PC-3 (cell line): ENCODE measurements at regions of chr4 and their contacts with region 1.

Region 1: GRCh38 chr4:109977854-109978501 is 65.3 kb downstream of the EGF start:
- DNase-seq: peak; percentile 79
- ATAC-seq: peak; percentile 50
- H3K4me3 ChIP-seq: no peak overlapping the region
- H3K27ac ChIP-seq: no peak overlapping the region
- H3K4me1 ChIP-seq: peaks cover 19% of the 10 kb centered on the region
- H3K27me3 ChIP-seq: no peaks in the 10 kb centered on the region
- CTCF ChIP-seq: peak; percentile 63

Region 2: GRCh38 chr4:109424093-109424841 is 553.7 kb before region 1 on chr4:
- CTCF ChIA-PET with region 1: no interaction called
- POLR2A ChIA-PET with region 1: no interaction called
- intact Hi-C with region 1: loop called (anchors 2 kb)
- DNase-seq: no peak
- ATAC-seq: no peak
- H3K4me3 ChIP-seq: no peak overlapping the region
- H3K27ac ChIP-seq: no peak overlapping the region
- H3K4me1 ChIP-seq: no peaks in the 10 kb centered on the region
- H3K27me3 ChIP-seq: no peaks in the 10 kb centered on the region
- CTCF ChIP-seq: no peak

Region 3: GRCh38 chr4:109676886-109677285 is 301.1 kb before region 1 on chr4:
- CTCF ChIA-PET with region 1: no interaction called
- POLR2A ChIA-PET with region 1: no interaction called
- intact Hi-C with region 1: loop called (anchors 1 kb)
- DNase-seq: peak; percentile 4
- ATAC-seq: no peak
- H3K4me3 ChIP-seq: no peak overlapping the region
- H3K27ac ChIP-seq: no peak overlapping the region
- H3K4me1 ChIP-seq: no peaks in the 10 kb centered on the region
- H3K27me3 ChIP-seq: no peaks in the 10 kb centered on the region
- CTCF ChIP-seq: 0 out of 2 replicates have a peak, but pooled peaks have one; percentile 27

Region 4: DNA sequence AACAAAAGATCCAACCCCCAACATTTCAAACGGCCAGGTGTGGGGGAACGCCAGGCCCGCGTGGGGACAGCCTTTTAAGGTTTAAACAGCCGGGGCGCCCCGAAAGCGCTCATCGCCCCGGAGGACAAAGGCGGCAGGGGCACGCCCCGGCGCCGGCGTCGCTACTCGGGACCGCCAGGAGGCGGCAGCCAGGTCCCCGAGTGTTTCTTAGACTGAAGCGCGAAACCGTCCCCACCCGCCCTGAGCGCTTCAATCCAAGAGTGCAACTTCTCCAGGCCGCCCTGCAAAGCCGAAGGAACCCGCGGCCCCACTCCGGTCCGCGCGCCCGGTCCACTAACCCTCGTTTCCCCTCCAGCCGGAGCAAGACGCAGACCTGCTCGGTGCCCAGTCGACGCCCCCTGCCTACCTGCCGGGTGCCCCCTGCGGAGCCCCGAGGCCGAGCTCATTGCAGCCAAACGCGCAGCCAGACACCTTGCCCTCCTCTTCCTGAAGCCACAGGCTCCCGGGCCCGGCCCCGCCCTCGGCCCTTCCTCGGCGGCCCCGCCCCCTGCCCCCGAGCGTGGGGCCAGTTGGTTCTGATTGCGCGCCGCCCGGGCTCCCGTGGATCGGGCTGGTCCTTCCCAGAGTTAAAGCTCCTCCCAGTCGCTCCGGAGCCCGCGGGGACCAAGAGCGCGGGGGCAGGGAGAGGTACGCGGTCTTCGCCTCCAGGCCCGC is 274.9 kb before region 1 on chr4 and contains the start of gene CASP6:
- CTCF ChIA-PET with region 1: no interaction called
- POLR2A ChIA-PET with region 1: no interaction called
- intact Hi-C with region 1: loop called (anchors 2 kb)
- DNase-seq: peak; percentile 73
- ATAC-seq: peak; percentile 83
- H3K4me3 ChIP-seq: peak within 1 kb of the TSS; percentile 96
- H3K27ac ChIP-seq: peak within 1 kb of the TSS; percentile 25; the same call in 1 of the 2 replicates
- H3K4me1 ChIP-seq: peaks cover 9% of the 10 kb centered on the region
- H3K27me3 ChIP-seq: no peaks in the 10 kb centered on the region
- CTCF ChIP-seq: peak; percentile 59
- total RNA-seq, gene CASP6: 33.7 and 36.7 TPM in 2 replicates

Region 5: GRCh38 chr4:109803924-109804571 is 173.9 kb before region 1 on chr4:
- CTCF ChIA-PET with region 1: no interaction called
- POLR2A ChIA-PET with region 1: no interaction called
- intact Hi-C with region 1: loop called (anchors 1 kb)
- DNase-seq: peak; percentile 58
- ATAC-seq: peak; percentile 80
- H3K4me3 ChIP-seq: no peak overlapping the region
- H3K27ac ChIP-seq: no peak overlapping the region
- H3K4me1 ChIP-seq: no peaks in the 10 kb centered on the region
- H3K27me3 ChIP-seq: no peaks in the 10 kb centered on the region
- CTCF ChIP-seq: peak; percentile 68

Region 6: DNA sequence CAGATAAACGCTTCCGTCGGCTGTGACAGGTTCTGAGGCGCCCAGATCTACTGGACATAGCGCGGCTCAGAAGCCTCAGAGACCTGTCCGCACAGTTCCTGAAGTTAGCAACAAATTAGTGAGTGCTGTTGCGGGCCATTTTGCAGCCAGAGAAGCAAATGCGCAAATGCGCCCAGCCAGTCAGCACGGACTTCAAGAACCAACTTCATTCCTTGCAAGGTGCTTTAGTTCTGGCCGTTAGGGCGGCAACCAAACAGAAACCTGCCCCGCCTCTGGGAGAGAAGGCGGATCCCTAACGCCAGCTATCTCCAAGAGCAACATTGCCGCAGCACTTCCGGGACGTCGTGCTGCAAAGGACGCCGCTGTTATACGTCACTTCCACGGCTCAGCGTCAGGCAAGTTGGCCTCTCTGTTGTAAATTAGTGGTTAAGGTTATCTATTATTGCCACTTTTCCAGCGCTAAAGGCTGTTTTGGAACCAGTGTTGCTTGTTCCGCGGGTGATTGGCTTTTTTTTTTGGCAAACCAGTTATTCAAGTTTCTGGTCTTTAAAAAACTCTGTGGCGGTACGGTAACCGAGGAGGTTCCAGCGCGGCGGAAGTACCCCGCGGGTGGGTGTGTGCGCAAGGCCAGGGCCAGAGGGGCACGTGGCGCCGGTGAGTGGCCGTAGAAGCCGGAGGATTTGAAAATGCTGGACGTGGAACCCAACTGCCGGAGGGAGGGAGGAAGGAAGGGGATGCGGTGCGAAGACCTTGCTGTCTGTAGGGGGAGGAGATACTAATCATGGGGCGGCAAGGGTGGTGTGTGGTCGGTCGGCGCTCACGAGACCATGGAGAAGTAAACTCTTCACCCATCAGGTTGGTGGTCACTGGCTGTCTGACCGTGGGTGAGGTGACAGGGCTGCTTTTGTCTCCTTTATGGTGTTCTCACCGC is 162.6 kb before region 1 on chr4 and contains the start of gene GAR1:
- CTCF ChIA-PET with region 1: no interaction called
- POLR2A ChIA-PET with region 1: no interaction called
- intact Hi-C with region 1: loop called (anchors 2 kb)
- DNase-seq: peak; percentile 93
- ATAC-seq: peak; percentile 98
- H3K4me3 ChIP-seq: peak within 1 kb of the TSS; percentile 98
- H3K27ac ChIP-seq: peak within 1 kb of the TSS; percentile 79
- H3K4me1 ChIP-seq: peaks cover 8% of the 10 kb centered on the region; the same call in 1 of the 2 replicates
- H3K27me3 ChIP-seq: no peaks in the 10 kb centered on the region
- CTCF ChIP-seq: no peak
- total RNA-seq, gene GAR1: 15.9 and 26.0 TPM in 2 replicates

Region 7: GRCh38 chr4:109826719-109827118 is 151.3 kb before region 1 on chr4:
- CTCF ChIA-PET with region 1: no interaction called
- POLR2A ChIA-PET with region 1: no interaction called
- intact Hi-C with region 1: loop called (anchors 1 kb)
- DNase-seq: peak; percentile 32
- ATAC-seq: peak; percentile 33; the same call in 1 of the 2 replicates
- H3K4me3 ChIP-seq: no peak overlapping the region
- H3K27ac ChIP-seq: no peak overlapping the region
- H3K4me1 ChIP-seq: no peaks in the 10 kb centered on the region
- H3K27me3 ChIP-seq: no peaks in the 10 kb centered on the region
- CTCF ChIP-seq: peak; percentile 68

Region 8: GRCh38 chr4:110009550-110009949 is 31.6 kb after region 1 on chr4:
- CTCF ChIA-PET with region 1: no interaction called
- POLR2A ChIA-PET with region 1: no interaction called
- intact Hi-C with region 1: no loop called
- DNase-seq: no peak
- ATAC-seq: no peak
- H3K4me3 ChIP-seq: no peak overlapping the region
- H3K27ac ChIP-seq: no peak overlapping the region
- H3K4me1 ChIP-seq: no peaks in the 10 kb centered on the region
- H3K27me3 ChIP-seq: no peaks in the 10 kb centered on the region
- CTCF ChIP-seq: no peak

Region 9: DNA sequence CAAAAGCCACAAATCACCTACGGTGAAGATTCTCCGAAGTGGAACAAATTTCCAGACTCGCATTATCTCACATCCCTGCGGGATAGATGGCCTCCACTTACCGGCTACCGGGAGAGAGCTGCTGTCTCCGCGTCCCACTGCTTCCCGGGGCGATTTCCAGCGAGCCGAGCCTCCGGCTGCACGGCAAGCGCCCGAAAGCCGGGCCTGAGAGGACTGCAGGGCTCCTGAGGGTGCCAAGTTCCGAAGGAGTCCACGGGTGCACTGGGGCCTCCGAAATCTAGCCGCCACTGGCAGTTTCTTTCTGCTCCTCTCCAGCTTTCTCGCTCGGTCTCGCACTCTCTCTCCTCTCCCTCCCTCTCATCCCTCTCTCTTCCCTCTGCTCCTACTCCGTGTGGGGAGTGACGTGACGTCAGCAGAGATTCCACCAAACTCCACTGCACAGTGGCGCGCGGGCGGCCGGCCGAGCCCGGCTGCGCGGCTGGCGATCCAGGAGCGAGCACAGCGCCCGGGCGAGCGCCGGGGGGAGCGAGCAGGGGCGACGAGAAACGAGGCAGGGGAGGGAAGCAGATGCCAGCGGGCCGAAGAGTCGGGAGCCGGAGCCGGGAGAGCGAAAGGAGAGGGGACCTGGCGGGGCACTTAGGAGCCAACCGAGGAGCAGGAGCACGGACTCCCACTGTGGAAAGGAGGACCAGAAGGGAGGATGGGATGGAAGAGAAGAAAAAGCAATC is 658.9 kb after region 1 on chr4:
- CTCF ChIA-PET with region 1: no interaction called
- POLR2A ChIA-PET with region 1: no interaction called
- intact Hi-C with region 1: no loop called
- DNase-seq: no peak
- ATAC-seq: no peak
- H3K4me3 ChIP-seq: no peak overlapping the region
- H3K27ac ChIP-seq: no peak overlapping the region
- H3K4me1 ChIP-seq: peaks cover 2% of the 10 kb centered on the region; the same call in 1 of the 2 replicates
- H3K27me3 ChIP-seq: peaks cover 97% of the 10 kb centered on the region
- CTCF ChIP-seq: no peak